GM18951 (cell line): ENCODE measurements at regions of chr10 and their contacts with region 1.

Region 1: DNA sequence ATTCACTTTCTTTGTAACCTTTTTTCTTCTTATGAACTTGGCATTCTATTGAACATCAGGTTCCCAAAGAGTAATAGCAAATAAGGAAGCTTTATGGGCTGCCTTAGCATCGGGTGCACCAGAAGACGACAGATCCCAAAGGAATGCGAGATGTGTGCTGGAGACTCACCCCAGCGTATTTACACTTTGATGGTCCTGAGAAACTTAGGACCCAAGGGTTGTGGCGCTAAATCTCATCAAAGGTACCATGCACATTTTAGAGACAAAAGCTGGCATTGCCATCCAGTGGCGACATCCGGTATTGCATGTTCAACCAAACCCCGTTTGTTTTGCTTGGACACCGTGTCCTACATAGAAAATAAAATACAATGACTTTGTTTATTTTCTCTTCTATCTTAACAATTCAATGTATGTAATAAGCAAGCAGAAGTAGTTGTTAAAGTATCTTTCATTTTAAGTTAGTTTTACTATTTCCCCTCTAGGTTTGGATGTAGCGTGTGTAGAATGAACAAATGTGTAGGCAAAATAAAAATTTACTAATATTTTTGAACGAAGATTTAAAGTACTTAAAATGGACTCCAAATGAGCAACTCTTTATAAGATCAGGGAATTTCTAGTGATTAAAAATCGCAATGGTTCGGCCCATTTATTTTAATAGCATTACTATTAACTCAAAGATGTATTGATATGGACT is 1154.8 kb downstream of the GATA3 start:
- POLR2A ChIP-seq: no peak

Region 2: GRCh38 chr10:7872041-7872442 is 1337.2 kb before region 1 on chr10:
- in situ Hi-C with region 1: loop called (anchors 25 kb)
- POLR2A ChIP-seq: no peak

Region 3: GRCh38 chr10:8044908-8045725 is 1164.1 kb before region 1 on chr10:
- in situ Hi-C with region 1: loop called (anchors 25 kb)
- POLR2A ChIP-seq: no peak

Region 4: GRCh38 chr10:9515922-9516321 is 306.7 kb after region 1 on chr10:
- in situ Hi-C with region 1: no loop called
- POLR2A ChIP-seq: no peak